Endothelial cell of umbilical vein (primary cell): ENCODE measurements at regions of chr7 and their contacts with region 1.

Region 1: DNA sequence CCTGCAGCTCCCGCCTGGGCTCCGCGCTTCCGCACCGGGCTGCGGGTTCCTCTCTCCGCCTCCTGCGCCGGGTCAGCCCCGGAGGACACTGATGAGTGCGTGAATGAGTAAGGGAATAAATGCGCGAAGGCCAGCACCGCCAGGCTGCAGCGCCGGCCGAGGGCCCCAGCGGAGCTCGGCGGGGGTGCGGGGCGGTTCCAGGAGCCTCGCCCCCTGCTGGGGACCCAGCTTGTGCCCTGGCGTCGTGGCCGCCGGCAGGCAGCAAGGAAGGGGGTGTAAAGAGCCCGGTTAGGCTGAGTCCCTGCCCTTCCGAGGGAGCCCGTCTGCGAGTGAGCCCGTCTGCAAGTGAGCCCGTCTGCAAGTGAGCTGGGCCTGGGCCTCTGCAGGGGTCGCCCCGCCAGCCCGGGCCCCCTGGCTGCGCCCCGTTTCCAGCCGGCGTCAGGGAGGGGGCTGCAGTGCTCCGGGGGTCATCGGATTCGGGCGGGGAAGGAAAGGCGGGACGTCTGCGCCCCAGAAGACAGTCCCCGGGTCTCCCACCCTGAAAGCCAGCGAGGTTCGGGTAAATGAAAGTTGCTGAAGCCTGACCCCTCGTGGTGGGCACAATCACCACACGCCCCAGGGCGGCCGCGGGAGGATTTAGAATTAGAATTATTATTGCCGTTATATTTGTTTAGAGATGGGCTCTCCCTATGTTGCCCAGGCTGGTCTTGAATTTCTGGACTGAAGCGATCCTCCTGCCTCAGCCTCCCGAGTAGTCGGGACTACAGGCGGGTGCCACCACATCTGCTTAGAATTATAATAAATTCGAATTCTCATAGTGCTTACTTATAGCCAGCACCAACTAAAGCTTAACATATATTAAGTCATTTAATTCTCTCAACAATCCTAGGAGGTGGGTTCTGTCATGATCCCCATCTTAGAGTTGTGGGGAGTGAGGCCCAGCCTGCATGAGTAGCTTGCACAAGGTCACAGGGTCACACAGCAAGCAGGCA is 8.6 kb upstream of the CRYGN start:
- DNase-seq: peak; percentile 72
- H3K4me3 ChIP-seq: peak overlapping the region; percentile 12 to 53 (median 18)
- H3K27ac ChIP-seq: no peak overlapping the region
- H3K4me1 ChIP-seq: no peaks in the 10 kb centered on the region
- H3K27me3 ChIP-seq: peaks cover 0 to 7% of the 10 kb centered on the region in 2 experiments
- CTCF ChIP-seq: peak; percentile 70 to 80
- POLR2A ChIP-seq: no peak

Region 2: DNA sequence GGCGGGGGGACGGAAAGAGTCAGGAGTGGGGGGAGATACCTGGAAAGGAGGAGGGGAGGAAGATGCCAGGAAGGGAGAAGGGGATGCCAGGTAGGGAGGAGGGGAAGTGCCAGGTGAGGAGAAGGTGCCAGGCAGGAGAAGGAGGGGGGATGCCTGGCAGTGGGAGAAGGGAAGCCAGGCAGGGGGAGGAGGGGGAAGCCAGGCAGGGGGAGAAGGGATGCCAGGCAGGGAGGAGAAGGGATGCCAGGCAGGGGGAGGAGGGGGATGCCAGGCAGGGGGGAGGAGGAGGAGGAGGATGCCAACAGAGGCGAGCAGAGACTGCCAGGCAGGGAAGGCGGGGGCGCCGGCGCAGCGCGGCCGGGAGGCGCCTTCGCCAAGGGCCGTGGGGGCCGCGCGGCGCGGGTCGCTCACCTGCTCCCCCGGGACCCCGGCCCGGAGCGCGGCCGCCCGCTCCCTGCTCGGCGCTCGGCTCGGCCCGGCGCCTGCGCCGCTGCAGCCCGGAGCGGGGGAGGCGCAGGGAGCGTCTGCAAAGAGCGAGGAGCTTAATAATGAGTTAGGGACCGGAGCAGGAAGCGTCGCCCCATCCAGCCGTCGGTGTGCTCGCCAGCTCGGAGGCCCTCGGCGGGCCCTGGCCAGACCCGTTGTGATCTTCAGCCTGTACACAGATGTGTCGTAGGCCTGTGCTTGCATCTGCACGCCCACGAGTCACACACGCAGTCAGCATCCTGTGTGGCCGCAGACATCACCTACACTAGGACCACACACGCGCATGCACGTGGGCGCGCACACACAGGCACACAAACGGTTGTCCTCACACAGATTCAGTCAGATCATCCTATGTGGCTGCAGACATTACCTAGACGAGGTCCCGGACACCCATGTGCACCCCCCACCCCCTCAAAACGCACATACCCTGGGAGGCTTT is 171.6 kb before region 1 on chr7:
- CTCF ChIA-PET with region 1: no interaction called
- POLR2A ChIA-PET with region 1: no interaction called
- dilution Hi-C with region 1: no loop called
- intact Hi-C with region 1: no loop called
- DNase-seq: peak; percentile 25
- H3K4me3 ChIP-seq: peak overlapping the region in 1 of 3 experiments; percentile 26
- H3K27ac ChIP-seq: no peak overlapping the region
- H3K4me1 ChIP-seq: no peaks in the 10 kb centered on the region
- H3K27me3 ChIP-seq: peaks cover 7 to 8% of the 10 kb centered on the region in 2 experiments
- CTCF ChIP-seq: no peak
- POLR2A ChIP-seq: no peak

Region 3: DNA sequence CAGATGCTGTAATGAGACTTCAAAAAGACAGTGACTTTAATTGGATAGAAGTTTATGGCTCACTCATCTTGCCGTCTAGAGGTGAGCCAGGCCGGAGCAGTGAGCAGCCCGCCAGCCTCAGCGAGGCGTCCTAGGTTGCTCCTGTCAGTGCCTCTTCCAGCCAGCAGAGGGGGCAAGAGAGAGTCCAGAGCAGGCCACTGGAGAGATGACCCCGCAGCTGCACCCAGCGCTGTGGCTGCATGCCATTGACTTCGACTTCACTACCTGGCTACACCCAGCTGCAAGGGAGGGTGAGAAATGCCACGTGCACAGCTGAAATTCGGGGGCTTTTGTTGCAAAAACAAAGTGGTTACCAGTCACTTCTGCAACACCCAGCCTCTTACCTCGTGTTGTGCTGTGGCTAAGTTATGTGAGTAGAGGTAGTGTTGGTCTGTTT is 80.4 kb before region 1 on chr7:
- CTCF ChIA-PET with region 1: interaction called, 96 read pairs
- POLR2A ChIA-PET with region 1: no interaction called
- dilution Hi-C with region 1: no loop called
- intact Hi-C with region 1: loop called (anchors 1 kb)
- DNase-seq: peak; percentile 71
- H3K4me3 ChIP-seq: no peak overlapping the region
- H3K27ac ChIP-seq: no peak overlapping the region
- H3K4me1 ChIP-seq: no peaks in the 10 kb centered on the region
- H3K27me3 ChIP-seq: no peaks in the 10 kb centered on the region
- CTCF ChIP-seq: peak; percentile 97 to 99
- POLR2A ChIP-seq: no peak

Region 4: DNA sequence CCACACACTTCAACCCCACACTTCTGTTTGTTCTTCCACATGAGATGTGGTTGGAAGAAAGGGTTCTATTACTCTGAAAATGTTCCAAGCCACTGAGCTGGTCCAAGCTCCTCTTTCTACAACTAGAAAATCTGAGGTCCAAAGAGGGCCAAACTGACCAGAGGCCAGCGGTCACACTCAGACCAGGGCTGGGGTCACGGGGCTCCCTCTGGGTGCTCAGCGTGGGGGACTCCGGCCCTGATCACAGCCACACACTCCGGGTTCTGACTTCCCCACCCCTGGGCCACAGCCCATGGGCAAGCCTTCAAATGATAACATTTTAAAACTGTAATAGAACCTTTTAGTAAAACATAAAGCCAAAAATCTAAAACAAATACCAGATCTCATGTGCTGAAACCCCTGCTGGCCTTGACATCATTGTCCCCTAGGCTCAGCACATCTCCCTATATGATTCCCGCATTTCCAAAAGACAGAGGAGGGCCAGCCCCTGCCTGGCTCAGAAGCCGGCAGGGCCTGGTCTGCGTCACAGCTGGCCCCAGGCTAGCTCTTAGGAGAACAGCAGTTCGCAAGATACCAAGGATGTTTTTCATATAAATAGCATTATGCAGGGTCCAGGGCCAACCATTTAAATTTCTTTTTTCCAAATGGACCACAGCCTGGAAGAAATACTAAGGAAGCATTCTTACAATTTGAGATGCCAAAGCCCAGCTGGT is 12.0 kb before region 1 on chr7:
- CTCF ChIA-PET with region 1: interaction called, 21 read pairs
- POLR2A ChIA-PET with region 1: no interaction called
- dilution Hi-C with region 1: no loop called
- intact Hi-C with region 1: no loop called
- DNase-seq: no peak
- H3K4me3 ChIP-seq: no peak overlapping the region
- H3K27ac ChIP-seq: no peak overlapping the region
- H3K4me1 ChIP-seq: no peaks in the 10 kb centered on the region
- H3K27me3 ChIP-seq: peaks cover 18 to 27% of the 10 kb centered on the region in 2 experiments
- CTCF ChIP-seq: no peak
- POLR2A ChIP-seq: no peak

Region 5: DNA sequence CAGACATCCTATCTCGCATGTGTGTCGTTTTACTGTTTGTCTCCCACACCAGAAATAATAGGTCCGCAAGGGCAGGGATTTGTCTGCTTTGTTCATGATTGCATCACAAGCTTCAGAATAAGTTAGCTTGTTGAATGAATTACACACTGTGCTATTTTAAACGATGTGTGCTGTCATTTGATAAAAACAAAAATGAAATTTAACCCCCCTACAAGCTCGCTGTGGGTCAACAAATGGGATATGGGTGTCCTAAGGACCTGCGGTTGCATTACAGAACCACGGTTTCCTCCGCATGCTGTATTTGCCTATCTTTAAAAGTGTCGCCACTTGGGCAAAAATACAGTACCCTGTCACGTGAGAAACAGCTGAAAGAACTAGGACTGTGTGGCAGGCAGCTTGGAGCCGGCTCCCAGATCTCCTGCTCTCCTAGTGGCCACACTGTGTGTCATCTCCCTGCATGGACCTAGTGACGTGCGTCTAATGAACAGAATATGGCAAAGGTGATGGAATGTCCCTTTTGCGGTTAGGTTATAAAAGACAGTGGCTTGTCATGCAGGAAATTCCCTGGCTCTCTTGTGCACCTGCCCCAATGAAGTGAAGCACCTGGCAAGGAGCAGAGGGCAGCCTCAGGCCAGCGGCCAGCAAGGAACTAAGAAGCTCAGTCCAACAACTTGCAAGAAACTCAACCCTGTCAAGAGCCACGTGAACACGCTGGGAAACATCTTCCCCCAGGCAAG is 24.3 kb after region 1 on chr7:
- CTCF ChIA-PET with region 1: interaction called, 10 read pairs
- POLR2A ChIA-PET with region 1: no interaction called
- dilution Hi-C with region 1: no loop called
- intact Hi-C with region 1: no loop called
- DNase-seq: peak; percentile 86
- H3K4me3 ChIP-seq: no peak overlapping the region
- H3K27ac ChIP-seq: peak overlapping the region; percentile 69
- H3K4me1 ChIP-seq: peaks cover 17% of the 10 kb centered on the region
- H3K27me3 ChIP-seq: no peaks in the 10 kb centered on the region
- CTCF ChIP-seq: no peak
- POLR2A ChIP-seq: no peak

Region 6: DNA sequence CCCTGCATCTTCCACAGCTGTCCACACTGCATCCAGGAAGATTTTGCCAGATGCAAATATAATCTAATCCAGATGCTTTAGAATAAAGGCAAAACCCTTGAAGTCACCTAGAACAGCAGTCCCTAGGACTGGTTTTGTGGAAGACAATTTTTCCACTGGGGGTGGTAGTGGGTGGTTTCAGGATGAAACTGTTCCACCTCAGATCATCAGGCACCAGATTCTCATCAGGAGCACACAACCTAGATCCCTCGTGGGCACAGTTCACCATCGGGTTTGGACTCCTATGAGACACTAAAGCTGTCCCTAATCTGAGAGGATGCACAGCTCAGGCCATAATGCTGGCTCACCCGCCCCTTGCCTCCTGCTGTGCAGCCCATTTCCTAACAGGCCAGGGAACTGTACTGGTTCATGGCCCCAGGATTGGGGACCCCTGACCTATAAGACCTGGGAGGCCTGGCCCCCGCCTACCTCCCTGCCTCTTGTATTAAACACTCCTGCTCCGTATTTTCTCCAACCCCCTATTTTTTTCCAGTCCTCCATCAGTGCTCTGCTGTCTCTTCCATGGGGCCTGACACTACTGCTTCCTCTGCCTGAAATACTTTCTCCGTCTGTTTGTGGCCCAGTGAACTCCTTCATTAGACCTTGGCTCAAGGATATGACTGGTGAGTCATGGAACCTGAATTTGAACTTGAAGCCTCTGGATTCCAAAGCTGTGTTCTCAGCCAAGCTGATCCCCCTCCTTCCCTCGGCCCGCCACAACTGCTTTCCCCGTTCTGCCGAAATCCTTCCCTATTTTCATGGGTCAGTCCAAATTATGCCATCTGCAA is 151.1 kb after region 1 on chr7:
- CTCF ChIA-PET with region 1: no interaction called
- POLR2A ChIA-PET with region 1: no interaction called
- dilution Hi-C with region 1: no loop called
- intact Hi-C with region 1: no loop called
- DNase-seq: peak; percentile 85
- H3K4me3 ChIP-seq: peak overlapping the region in 1 of 3 experiments; percentile 14
- H3K27ac ChIP-seq: peak overlapping the region; percentile 88
- H3K4me1 ChIP-seq: peaks cover 42% of the 10 kb centered on the region
- H3K27me3 ChIP-seq: no peaks in the 10 kb centered on the region
- CTCF ChIP-seq: no peak
- POLR2A ChIP-seq: no peak